OCI-LY7 (cell line): ENCODE measurements at regions of chr1 and their contacts with region 1.

Region 1: DNA sequence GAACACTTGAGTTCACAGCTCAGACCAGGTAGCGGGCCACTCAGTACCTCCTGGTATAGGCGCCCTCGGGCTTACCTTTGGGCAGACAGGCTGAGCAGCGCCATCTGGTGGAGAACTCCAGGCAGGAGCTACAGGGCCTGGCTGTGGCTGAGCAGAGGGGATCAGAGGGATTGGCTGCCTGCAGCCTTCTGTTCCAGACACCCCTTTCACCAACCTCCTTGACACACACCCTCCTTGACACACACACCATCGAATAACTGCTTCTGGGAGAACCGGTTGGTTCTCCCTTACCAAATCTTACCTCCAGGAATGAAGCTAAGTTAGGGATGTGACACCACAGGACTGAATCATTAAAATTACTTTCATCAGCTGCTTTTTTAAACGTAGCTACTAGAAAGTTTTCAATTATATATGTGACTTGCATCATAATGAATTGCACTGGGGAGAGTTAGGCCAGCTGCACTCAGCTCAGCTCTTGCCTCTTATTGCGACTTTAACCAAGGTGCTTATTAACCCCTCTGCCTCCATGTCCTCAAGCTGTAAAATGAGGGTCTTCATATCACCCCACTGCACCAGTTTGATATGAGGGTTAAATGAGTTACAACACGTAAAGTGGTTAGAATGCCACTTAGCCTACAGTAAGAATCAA is 6.6 kb downstream of the LIN28A start:
- DNase-seq: peak; percentile 86
- H3K4me3 ChIP-seq: no peak overlapping the region
- H3K27ac ChIP-seq: no peak overlapping the region
- H3K4me1 ChIP-seq: no peaks in the 10 kb centered on the region
- CTCF ChIP-seq: peak; percentile 92

Region 2: DNA sequence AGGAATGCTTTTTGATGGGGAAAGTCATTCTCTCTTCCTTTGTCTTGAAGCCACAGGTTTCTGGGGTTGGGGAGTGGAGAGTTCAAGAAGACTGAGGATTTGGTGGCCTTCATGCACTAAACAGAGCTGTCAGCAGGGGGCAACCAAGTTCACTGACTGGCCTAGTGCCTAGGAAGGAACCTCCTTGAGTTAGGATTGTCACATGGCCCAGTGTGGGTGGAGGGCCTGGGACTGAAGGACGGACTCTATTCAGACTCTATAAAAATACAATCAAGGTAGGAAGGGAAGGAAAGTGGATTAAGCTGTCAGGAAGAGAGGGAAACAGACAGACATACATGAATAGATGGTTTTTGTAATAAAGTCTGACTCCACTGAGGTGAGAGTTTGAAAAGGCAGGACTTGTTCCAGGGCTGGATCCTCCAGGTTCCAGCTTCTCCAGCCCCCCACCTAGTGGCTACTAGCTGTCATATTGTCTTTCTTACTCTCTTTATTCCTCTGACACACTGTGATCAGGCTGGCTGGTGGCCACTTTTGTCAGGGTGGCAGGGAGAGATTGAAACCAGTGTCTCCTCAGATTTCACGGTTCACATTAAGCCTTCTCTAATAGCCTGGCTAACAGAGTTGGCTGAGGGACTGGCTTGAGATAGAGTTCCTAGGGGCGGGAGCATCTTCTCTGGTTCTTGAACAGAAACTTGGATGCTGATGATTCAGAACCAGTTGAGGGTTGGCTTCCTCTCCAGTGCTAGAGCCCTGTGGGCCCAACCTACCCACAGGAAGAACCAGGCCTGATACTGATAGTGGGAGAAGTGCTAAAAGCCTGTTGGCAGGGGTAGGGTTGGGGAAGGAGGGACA is 141.4 kb before region 1 on chr1:
- CTCF ChIA-PET with region 1: no interaction called
- POLR2A ChIA-PET with region 1: no interaction called
- intact Hi-C with region 1: loop called (anchors 2 kb)
- DNase-seq: peak; percentile 78
- H3K4me3 ChIP-seq: no peak overlapping the region
- H3K27ac ChIP-seq: peak overlapping the region; percentile 5
- H3K4me1 ChIP-seq: peaks cover 30% of the 10 kb centered on the region
- CTCF ChIP-seq: peak; percentile 90